MCF 10A (cell line): ENCODE measurements at regions of chr11 and their contacts with region 1.

Region 1: DNA sequence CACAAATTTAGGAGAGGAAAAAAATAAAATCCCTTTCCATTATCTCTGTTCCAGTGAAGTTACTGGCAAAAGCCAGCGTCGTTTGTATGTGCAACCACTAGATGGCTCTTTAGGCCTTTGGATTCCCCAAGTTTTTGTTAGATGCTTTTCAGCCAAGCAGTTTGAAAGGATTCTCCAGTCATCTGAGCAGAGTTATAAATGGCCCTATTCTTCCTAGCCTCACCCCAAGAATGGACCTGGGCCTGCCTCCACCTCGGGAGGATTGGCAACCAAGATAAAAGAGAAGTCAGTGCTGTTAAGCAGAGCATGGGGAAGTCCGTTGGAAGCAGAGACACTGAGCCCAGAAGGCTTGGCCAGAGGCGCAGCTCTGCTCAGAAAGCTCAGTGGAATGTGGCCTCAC is 15.4 kb downstream of the FAM181B start:
- DNase-seq: peak; percentile 58
- H3K4me3 Mint-ChIP-seq: no peak overlapping the region
- H3K27ac Mint-ChIP-seq: no peak overlapping the region
- H3K4me1 Mint-ChIP-seq: no peaks in the 10 kb centered on the region
- H3K27me3 Mint-ChIP-seq: no peaks in the 10 kb centered on the region
- CTCF ChIP-seq: peak; percentile 60

Region 2: GRCh38 chr11:82845356-82846353 is 127.3 kb after region 1 on chr11:
- CTCF ChIA-PET with region 1: interaction called, 16 read pairs
- POLR2A ChIA-PET with region 1: no interaction called
- intact Hi-C with region 1: no loop called
- DNase-seq: no peak
- H3K4me3 Mint-ChIP-seq: no peak overlapping the region
- H3K27ac Mint-ChIP-seq: peak overlapping the region; percentile 63
- H3K4me1 Mint-ChIP-seq: peaks cover 5% of the 10 kb centered on the region
- H3K27me3 Mint-ChIP-seq: no peaks in the 10 kb centered on the region
- CTCF ChIP-seq: no peak

Region 3: GRCh38 chr11:83102834-83103233 is 384.5 kb after region 1 on chr11:
- CTCF ChIA-PET with region 1: no interaction called
- POLR2A ChIA-PET with region 1: no interaction called
- intact Hi-C with region 1: no loop called
- DNase-seq: no peak
- H3K4me3 Mint-ChIP-seq: no peak overlapping the region
- H3K27ac Mint-ChIP-seq: no peak overlapping the region
- H3K4me1 Mint-ChIP-seq: no peaks in the 10 kb centered on the region
- H3K27me3 Mint-ChIP-seq: peaks cover 13% of the 10 kb centered on the region
- CTCF ChIP-seq: no peak